Tibial artery (tissue), 4 donors: ENCODE measurements at regions of chr3 and their contacts with region 1.

Region 1: DNA sequence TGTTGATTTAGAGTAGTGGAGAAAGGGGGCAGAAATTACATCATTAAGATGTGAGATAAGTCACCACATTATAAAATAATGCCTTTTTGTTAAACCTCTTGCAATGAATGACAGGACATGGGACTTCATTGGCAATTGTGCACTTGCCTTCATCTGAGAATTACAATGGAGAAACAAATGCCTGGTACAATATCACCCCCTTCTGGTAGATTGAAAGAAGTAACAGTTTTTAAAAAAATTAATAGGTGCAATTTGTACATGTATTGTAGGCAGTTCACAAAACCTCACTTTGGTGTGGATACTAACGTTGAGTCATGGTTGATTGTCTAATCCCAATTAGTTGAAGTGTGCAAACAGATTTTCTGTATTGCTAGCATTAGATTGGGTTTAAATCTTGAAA is 4.6 kb upstream of the P2RY14 start:
- DNase-seq: no peak
- H3K4me3 ChIP-seq: no peak overlapping the region
- H3K27ac ChIP-seq: no peak overlapping the region
- H3K4me1 ChIP-seq: peaks cover 0 to 8% (median 0%) of the 10 kb centered on the region in 4 donors
- H3K27me3 ChIP-seq: no peaks in the 10 kb centered on the region
- CTCF ChIP-seq: peak; percentile 67 to 77

Region 2: GRCh38 chr3:151168269-151169094 is 114.4 kb before region 1 on chr3:
- intact Hi-C with region 1: loop called (anchors 10 kb)
- DNase-seq: peak; percentile 74 to 77
- H3K4me3 ChIP-seq: no peak overlapping the region
- H3K27ac ChIP-seq: no peak overlapping the region
- H3K4me1 ChIP-seq: no peaks in the 10 kb centered on the region
- H3K27me3 ChIP-seq: no peaks in the 10 kb centered on the region
- CTCF ChIP-seq: peak; percentile 55 to 60

Region 3: GRCh38 chr3:151227807-151228665 is 54.9 kb before region 1 on chr3:
- intact Hi-C with region 1: loop called (anchors 5 kb)
- DNase-seq: peak; percentile 71 to 75
- H3K4me3 ChIP-seq: no peak overlapping the region
- H3K27ac ChIP-seq: no peak overlapping the region
- H3K4me1 ChIP-seq: peaks cover 0 to 14% (median 5%) of the 10 kb centered on the region in 4 donors
- H3K27me3 ChIP-seq: no peaks in the 10 kb centered on the region
- CTCF ChIP-seq: peak; percentile 87 to 88